Endothelial cell of umbilical vein (primary cell): ENCODE measurements at regions of chr12 and their contacts with region 1.

Region 1: DNA sequence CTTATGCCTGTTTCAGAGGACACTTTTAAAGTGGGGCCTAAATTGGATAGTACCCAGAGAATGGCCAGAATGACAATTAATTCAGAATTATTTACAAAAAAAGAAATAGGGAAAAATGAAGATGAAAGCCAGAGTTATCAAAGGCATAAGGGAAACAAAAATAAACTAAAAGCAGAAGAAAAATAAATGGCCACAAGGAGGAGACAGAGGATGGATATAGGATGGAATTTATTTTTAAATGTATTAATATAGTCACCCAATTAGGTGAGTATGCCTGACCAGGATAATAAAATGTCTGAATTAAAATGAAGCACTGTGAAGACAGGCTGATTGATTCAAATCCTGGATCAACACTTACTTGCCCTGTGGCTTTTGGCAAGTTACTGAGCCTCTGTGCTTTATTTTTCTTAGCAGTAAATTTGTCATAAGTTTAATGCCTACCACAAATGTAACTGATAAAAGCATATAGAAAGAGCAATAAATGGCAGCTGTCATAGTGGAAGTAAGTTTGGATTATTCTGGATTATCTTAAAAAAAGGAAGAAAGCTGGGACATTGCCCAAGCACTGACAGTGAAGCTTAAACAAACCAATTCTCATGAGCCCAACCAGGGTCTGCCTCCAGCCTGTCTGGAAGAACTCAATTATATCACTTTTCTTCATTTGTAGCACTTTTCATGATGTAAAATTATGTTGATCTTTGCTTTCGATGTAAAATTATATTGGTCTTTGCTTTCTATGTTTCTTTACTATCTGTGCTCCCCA is 3.5 kb downstream of the CLEC9A start:
- DNase-seq: peak; percentile 75
- H3K4me3 ChIP-seq: no peak overlapping the region
- H3K27ac ChIP-seq: peak overlapping the region; percentile 99
- H3K4me1 ChIP-seq: peaks cover 31% of the 10 kb centered on the region
- H3K27me3 ChIP-seq: no peaks in the 10 kb centered on the region
- CTCF ChIP-seq: peak; percentile 12 to 17
- POLR2A ChIP-seq: no peak

Region 2: DNA sequence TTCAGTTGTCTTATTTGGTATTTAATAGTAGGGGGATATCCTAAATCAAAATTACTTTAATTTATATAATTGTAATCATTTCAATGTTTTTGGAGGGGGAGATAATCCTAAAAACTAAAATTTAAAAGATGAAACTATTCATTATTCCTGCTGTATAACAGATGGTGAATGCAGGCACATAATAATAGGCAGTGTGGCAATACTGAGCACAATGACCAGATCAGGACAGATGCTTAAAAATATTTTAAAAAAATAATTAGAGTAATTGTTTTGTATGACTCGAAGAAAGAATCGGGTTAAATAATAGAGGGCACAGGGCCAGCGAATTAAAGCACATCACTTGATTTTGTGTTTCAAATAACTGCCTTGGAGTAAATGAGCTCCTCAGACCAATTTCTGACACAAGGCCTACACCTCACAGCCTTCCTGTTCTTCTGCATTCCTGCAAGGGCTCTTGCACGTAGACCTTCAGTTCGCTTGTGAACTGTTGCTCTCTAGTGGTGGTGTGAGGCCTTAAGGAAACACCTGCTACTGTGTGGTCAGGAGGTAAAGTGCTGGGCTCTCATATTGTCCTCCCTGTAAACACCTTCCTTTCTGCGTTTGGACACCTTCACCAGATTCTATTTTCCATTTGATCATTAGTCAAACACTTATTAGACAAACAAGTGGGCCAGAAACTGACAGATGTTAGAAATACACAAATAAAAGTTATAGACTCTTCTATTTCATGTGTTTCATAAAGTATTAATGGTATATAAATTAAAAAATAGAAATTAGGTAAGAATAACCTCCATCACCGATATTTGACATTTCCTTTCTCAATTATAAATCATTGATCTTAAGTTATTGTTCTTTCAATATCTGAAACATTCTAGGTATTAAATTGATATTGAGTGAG is 236.0 kb before region 1 on chr12:
- CTCF ChIA-PET with region 1: interaction called, 3 read pairs
- POLR2A ChIA-PET with region 1: no interaction called
- dilution Hi-C with region 1: no loop called
- intact Hi-C with region 1: loop called (anchors 5 kb)
- DNase-seq: peak; percentile 87
- H3K4me3 ChIP-seq: no peak overlapping the region
- H3K27ac ChIP-seq: peak overlapping the region; percentile 1
- H3K4me1 ChIP-seq: peaks cover 39% of the 10 kb centered on the region
- H3K27me3 ChIP-seq: no peaks in the 10 kb centered on the region
- CTCF ChIP-seq: peak; percentile 54 to 67
- POLR2A ChIP-seq: no peak

Region 3: GRCh38 chr12:9869307-9870161 is 164.4 kb before region 1 on chr12 and contains the start of gene CLEC2B:
- CTCF ChIA-PET with region 1: no interaction called
- POLR2A ChIA-PET with region 1: no interaction called
- dilution Hi-C with region 1: no loop called
- intact Hi-C with region 1: loop called (anchors 1 kb)
- DNase-seq: peak; percentile 92
- H3K4me3 ChIP-seq: peak within 1 kb of the TSS; percentile 28 to 93 (median 73)
- H3K27ac ChIP-seq: peak within 1 kb of the TSS; percentile 96
- H3K4me1 ChIP-seq: peaks cover 31% of the 10 kb centered on the region
- H3K27me3 ChIP-seq: no peaks in the 10 kb centered on the region
- CTCF ChIP-seq: no peak
- POLR2A ChIP-seq: peak; percentile 60
- total RNA-seq, gene CLEC2B: 16.4 and 18.3 TPM in 2 replicates

Region 4: GRCh38 chr12:10069099-10069498 is 35.1 kb after region 1 on chr12:
- CTCF ChIA-PET with region 1: interaction called, 12 read pairs
- POLR2A ChIA-PET with region 1: interaction called, 15 read pairs
- dilution Hi-C with region 1: no loop called
- intact Hi-C with region 1: loop called (anchors 1 kb)
- DNase-seq: peak; percentile 94
- H3K4me3 ChIP-seq: no peak overlapping the region
- H3K27ac ChIP-seq: peak overlapping the region; percentile 98
- H3K4me1 ChIP-seq: peaks cover 44% of the 10 kb centered on the region
- H3K27me3 ChIP-seq: no peaks in the 10 kb centered on the region
- CTCF ChIP-seq: no peak
- POLR2A ChIP-seq: peak; percentile 25

Region 5: GRCh38 chr12:10088955-10089900 is 55.3 kb after region 1 on chr12:
- CTCF ChIA-PET with region 1: no interaction called
- POLR2A ChIA-PET with region 1: no interaction called
- dilution Hi-C with region 1: no loop called
- intact Hi-C with region 1: no loop called
- DNase-seq: no peak
- H3K4me3 ChIP-seq: no peak overlapping the region
- H3K27ac ChIP-seq: no peak overlapping the region
- H3K4me1 ChIP-seq: no peaks in the 10 kb centered on the region
- H3K27me3 ChIP-seq: no peaks in the 10 kb centered on the region
- CTCF ChIP-seq: no peak
- POLR2A ChIP-seq: no peak

Region 6: DNA sequence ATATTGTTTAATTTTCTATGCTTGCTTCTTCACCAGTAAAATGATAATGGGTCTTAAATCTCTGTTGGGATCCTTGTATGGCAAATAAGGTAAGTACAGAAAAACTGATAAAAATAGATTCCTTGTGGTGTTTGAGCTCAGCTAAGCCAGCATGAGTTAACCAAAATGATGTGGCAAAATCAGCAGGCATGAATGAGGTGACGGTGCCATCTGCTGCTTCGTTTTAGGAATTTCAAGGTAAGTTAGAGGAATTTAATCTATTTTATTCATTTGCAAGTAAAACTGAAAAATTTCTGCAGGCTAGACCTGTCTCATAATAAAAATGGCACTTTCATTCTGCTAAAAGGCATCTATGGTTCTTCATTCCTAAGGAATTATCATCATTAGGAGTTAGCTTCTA is 106.0 kb after region 1 on chr12:
- CTCF ChIA-PET with region 1: interaction called, 74 read pairs
- POLR2A ChIA-PET with region 1: interaction called, 4 read pairs
- dilution Hi-C with region 1: no loop called
- intact Hi-C with region 1: loop called (anchors 1 kb)
- DNase-seq: peak; percentile 84
- H3K4me3 ChIP-seq: no peak overlapping the region
- H3K27ac ChIP-seq: no peak overlapping the region
- H3K4me1 ChIP-seq: no peaks in the 10 kb centered on the region
- H3K27me3 ChIP-seq: no peaks in the 10 kb centered on the region
- CTCF ChIP-seq: peak; percentile 39 to 40
- POLR2A ChIP-seq: no peak

Region 7: DNA sequence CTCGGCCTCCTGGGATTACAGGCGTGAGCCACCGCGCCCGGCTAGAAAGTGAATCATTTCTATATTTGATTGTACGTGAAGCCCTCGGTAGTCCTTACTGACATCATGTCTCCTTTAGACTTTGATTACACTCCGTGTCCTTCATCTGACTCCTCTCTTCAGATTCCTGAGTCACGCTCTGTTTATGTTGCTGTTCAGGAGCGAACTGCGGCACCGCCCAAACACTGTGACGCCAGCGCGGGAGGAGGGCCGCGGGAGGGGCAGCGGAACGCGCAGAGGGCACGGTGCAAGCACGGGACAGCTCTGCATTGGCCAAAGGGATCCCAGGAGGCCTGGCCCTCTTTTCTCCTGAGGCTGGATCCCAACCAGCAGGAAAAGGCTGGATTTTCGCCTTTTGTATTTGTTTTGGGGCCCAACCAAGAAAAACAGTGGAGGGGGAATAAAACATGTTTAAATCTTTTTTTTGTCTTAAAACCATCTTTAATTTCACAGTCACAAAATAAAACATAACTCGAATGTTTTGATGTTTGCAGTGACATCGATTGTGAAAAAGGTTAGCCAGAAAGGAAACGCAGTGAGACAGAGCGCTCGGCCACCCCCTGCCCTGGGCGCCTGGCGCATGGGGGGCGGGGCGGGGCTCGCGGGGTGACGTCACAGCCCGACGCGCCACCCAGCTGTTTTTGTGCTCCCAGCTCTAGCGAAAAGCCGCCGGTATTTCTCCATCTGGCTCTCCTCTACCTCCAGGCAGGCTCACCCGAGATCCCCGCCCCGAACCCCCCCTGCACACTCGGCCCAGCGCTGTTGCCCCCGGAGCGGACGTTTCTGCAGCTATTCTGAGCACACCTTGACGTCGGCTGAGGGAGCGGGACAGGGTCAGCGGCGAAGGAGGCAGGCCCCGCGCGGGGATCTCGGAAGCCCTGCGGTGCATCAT is 178.5 kb after region 1 on chr12 and contains the start of gene GABARAPL1:
- CTCF ChIA-PET with region 1: interaction called, 6 read pairs
- POLR2A ChIA-PET with region 1: interaction called, 5 read pairs
- dilution Hi-C with region 1: no loop called
- intact Hi-C with region 1: loop called (anchors 1 kb)
- DNase-seq: peak; percentile 100
- H3K4me3 ChIP-seq: peak within 1 kb of the TSS; percentile 46 to 99 (median 93)
- H3K27ac ChIP-seq: peak within 1 kb of the TSS; percentile 96
- H3K4me1 ChIP-seq: peaks cover 11% of the 10 kb centered on the region
- H3K27me3 ChIP-seq: no peaks in the 10 kb centered on the region
- CTCF ChIP-seq: no peak
- POLR2A ChIP-seq: no peak
- total RNA-seq, gene GABARAPL1: 59.4 and 69.0 TPM in 2 replicates

Region 8: GRCh38 chr12:10304161-10304574 is 270.2 kb after region 1 on chr12:
- CTCF ChIA-PET with region 1: no interaction called
- POLR2A ChIA-PET with region 1: no interaction called
- dilution Hi-C with region 1: no loop called
- intact Hi-C with region 1: no loop called
- DNase-seq: no peak
- H3K4me3 ChIP-seq: no peak overlapping the region
- H3K27ac ChIP-seq: no peak overlapping the region
- H3K4me1 ChIP-seq: no peaks in the 10 kb centered on the region
- H3K27me3 ChIP-seq: no peaks in the 10 kb centered on the region
- CTCF ChIP-seq: no peak
- POLR2A ChIP-seq: no peak

Region 9: DNA sequence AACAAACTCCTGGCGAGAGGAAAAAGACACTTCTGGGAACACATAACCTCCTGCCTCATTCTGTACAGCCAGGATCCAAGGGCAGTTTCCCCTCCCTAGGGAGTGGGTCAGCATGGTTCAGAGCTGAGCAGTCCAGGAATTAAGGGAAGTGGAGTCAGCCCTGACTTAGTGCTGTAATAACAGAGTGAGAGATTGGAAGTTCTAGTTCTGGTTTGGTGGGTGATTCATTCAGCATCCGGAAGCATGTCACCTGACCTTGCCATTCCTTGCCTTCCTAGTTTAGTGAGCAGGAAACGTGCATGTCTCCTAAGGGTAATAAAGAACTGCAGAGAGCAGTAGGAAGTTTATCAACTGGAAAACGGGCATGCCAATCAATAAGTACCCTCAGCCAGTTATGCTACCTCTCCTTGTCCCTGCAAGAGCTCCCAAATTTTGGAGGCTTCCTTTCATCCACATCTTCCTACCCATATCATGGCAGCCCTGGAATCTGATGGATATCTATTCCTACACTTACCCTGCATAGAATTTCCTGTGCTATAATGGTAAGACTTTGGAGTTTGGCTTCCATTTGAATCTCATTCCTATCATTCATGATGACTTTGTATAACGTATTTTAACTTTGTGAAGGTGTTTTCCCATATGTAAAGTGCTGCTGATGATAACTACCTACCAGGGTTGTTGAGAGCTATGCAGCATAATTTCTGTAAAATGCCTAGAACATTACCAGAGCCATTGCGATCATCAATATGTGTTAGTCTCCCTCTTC is 608.0 kb after region 1 on chr12:
- CTCF ChIA-PET with region 1: no interaction called
- POLR2A ChIA-PET with region 1: no interaction called
- dilution Hi-C with region 1: no loop called
- intact Hi-C with region 1: loop called (anchors 10 kb)
- DNase-seq: peak; percentile 99
- H3K4me3 ChIP-seq: peak overlapping the region in 1 of 3 experiments; percentile 43
- H3K27ac ChIP-seq: peak overlapping the region; percentile 98
- H3K4me1 ChIP-seq: peaks cover 48% of the 10 kb centered on the region
- H3K27me3 ChIP-seq: no peaks in the 10 kb centered on the region
- CTCF ChIP-seq: no peak
- POLR2A ChIP-seq: peak; percentile 95